Right ventricle myocardium inferior (tissue), 1 donor: ENCODE measurements at regions of chr10 and their contacts with region 1.

Region 1: DNA sequence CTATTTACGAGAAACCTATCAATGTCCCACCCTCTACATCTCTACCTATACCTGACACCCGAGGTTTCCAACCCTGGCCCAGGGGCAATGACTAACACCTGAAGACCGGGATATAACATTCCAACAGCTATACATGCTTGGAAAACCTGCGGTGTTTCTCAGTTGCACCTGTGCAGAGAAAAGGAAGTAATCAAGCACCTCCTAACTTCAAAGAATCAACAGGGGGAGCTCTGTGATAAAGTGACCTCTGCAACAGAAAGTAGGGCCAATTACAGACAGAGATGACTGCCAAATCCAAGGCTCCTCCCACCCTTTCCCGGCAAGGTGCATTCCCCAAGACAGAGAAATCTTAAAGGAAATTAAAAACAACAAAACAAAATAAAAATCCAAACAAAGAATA is 41.3 kb downstream of the CCDC6 start:
- DNase-seq: no peak
- ATAC-seq: peak; percentile 68

Region 2: GRCh38 chr10:59625721-59626522 is 239.2 kb before region 1 on chr10:
- intact Hi-C with region 1: no loop called
- DNase-seq: no peak
- ATAC-seq: peak; percentile 70

Region 3: GRCh38 chr10:59906417-59907202 is 41.5 kb after region 1 on chr10 and contains the start of gene CCDC6:
- intact Hi-C with region 1: loop called (anchors 2 kb)
- DNase-seq: peak; percentile 95
- ATAC-seq: peak; percentile 96
- total RNA-seq, gene CCDC6: 16.2 TPM

Region 4: DNA sequence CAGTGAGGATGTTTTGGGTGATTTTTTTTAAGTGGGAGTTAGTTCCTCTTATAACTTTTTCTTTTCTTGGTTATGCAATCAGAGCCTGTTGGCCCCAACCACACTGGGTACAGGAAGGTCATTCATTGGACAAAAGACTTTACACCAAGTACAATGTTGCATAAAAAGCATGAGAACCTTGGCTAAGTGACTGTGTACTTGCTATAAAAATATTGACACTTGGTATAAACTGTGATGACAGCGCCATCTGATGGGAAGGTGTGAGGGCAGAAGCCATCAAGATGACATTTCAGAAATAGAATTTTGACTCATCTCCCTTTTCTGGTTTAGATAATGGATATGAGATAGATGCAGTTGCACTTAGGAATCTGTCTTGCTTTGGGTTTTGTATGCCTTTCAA is 167.6 kb after region 1 on chr10:
- intact Hi-C with region 1: loop called (anchors 10 kb)
- DNase-seq: no peak
- ATAC-seq: peak; percentile 82